ENCODE measurements at regions of chr15 and their contacts with region 1.

Region 1: DNA sequence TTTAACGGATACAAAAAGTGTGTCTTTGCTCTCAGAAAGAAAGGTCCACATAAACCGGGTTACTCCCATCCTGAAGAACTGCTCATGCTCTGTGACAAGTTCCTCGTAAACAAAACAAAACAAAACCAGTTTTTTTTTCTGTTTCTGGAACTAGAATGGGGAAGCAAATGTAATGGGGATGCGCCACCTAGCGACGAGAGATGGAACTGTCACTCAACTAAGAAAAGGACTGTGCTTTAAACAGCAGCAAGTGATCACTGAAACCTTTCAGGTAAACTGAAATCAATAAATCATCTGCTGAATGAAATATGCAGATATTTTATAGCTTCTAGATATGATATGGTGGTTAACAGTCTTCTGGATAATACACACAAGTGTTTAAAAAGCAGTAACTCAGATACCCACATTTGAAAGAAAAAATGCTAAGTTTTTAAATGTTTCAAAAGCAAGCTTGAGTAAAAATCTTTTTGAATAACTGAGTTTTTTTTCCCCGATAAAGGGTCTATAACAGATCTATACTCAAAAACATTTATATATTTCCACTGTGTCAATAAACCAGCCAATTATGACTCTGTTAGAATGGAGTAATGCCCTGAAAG is 10.9 kb downstream of the TM2D3 start:
- DNase-seq: peak; percentile 54 to 75 (median 58)
- ATAC-seq: peak; percentile 81
- H3K4me3 ChIP-seq: no peak overlapping the region
- H3K27ac ChIP-seq: no peak overlapping the region
- H3K4me1 ChIP-seq: no peaks in the 10 kb centered on the region; a peak in 1 of 5 replicates
- H3K27me3 ChIP-seq: no peaks in the 10 kb centered on the region
- CTCF ChIP-seq: peak; percentile 70 to 91 (median 84)
- EP300 ChIP-seq: no peak
- POLR2A ChIP-seq: no peak
- RAD21 ChIP-seq: peak; percentile 82 to 83

Region 2: GRCh38 chr15:101014921-101015841 is 626.1 kb before region 1 on chr15:
- CTCF ChIA-PET with region 1: no interaction called
- POLR2A ChIA-PET with region 1: no interaction called
- in situ Hi-C with region 1: no loop called
- intact Hi-C with region 1: loop called (anchors 2 kb)
- DNase-seq: peak; percentile 80 to 82 (median 82)
- ATAC-seq: peak; percentile 89
- H3K4me3 ChIP-seq: no peak overlapping the region
- H3K27ac ChIP-seq: no peak overlapping the region
- H3K4me1 ChIP-seq: peaks cover 0 to 11% of the 10 kb centered on the region in 2 experiments; a peak in 3 of 5 replicates
- H3K27me3 ChIP-seq: peaks cover 8 to 30% of the 10 kb centered on the region in 2 experiments; a peak in 4 of 5 replicates
- CTCF ChIP-seq: peak; percentile 87 to 93 (median 92)
- EP300 ChIP-seq: no peak
- POLR2A ChIP-seq: no peak
- RAD21 ChIP-seq: peak; percentile 89 to 94

Region 3: DNA sequence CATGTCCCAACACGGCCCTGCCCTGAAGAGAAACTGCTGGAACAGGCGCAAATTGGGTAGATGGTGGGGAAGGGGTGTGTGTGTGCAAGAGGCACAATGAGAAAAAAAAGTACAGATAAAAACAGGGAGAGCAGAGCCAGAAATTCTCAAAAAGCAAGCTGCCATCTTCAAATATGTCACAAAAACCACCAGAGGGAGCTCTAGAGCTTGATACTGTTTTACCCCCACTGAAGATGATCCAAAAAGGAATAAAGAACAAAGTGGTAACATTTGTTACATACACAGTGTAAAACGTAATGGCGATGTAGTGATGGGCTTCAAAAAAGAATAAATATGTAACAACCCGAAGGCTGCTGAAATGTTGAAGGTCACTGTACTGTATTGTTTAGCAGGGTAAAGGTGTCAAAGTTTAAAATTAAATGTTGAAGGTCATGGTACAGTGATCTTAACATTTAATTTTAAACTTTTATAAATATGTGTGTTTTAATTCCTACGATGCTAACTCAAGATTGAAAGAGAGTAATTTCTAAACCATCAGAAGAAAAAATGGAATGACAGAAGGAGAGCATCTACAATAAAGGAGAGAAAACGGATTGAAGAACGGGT is 352.3 kb before region 1 on chr15:
- CTCF ChIA-PET with region 1: interaction called, 16 read pairs
- POLR2A ChIA-PET with region 1: interaction called, 3 read pairs
- in situ Hi-C with region 1: no loop called
- intact Hi-C with region 1: no loop called
- DNase-seq: peak in 3 of 4 experiments; percentile 35 to 70 (median 67)
- ATAC-seq: peak; percentile 72
- H3K4me3 ChIP-seq: no peak overlapping the region
- H3K27ac ChIP-seq: no peak overlapping the region
- H3K4me1 ChIP-seq: peaks cover 0 to 7% of the 10 kb centered on the region in 2 experiments; a peak in 1 of 5 replicates
- H3K27me3 ChIP-seq: no peaks in the 10 kb centered on the region
- CTCF ChIP-seq: peak; percentile 51 to 74 (median 72); a peak in 5 of 6 replicates
- EP300 ChIP-seq: no peak
- POLR2A ChIP-seq: no peak
- RAD21 ChIP-seq: peak; percentile 53 to 57

Region 4: DNA sequence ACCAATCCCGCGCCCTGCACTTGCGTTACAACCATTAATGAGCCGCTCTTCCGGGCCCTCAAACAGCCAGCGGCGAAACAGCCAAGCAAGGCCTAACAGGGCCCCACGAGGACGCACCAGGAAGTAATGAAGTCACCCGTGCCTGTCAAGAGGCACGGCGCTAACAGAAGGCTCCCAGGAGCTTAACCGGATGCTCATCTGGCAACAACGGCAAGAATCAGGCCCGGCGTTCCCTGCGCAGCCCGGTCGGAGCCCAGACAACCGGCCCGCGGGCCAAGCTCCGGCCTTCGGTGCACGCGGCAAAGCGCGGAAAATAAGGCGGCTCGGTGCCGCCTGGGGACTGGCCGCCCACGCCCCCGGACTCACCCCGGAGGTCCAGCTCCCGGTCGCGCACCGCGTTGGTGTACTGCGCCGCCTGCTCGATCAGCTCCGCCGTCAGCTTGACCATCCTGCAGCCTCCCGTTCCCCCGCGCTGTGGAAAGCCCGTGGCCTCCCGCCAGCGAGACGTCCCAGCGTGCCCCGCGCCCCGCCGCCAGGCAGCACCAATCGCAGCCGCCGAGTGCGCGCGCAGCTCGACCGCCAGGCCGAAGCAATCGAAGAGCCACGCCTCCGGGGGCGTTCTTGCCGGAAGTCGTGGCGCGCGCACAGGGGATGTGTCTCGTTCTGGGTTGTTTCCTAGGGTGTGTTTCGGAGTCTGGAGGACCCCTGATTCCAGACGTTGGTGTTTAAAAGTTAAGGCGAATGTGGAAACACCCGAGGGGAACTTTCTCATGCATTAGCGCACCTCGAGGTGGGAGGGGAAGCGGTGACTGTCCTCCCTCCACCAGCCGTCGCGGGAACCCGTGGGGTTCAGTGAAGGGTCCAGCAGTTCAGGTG is 346.3 kb before region 1 on chr15 and contains the start of gene SNRPA1:
- CTCF ChIA-PET with region 1: interaction called, 17 read pairs
- POLR2A ChIA-PET with region 1: interaction called, 3 read pairs
- in situ Hi-C with region 1: no loop called
- intact Hi-C with region 1: loop called (anchors 1 kb)
- DNase-seq: peak; percentile 94 to 97 (median 96)
- ATAC-seq: peak; percentile 91
- H3K4me3 ChIP-seq: peak within 1 kb of the TSS; percentile 96
- H3K27ac ChIP-seq: peak within 1 kb of the TSS; percentile 92
- H3K4me1 ChIP-seq: peaks cover 7 to 9% of the 10 kb centered on the region in 2 experiments; a peak in 2 of 5 replicates
- H3K27me3 ChIP-seq: no peaks in the 10 kb centered on the region
- CTCF ChIP-seq: no peak
- EP300 ChIP-seq: peak; percentile 41; the same call in 1 of the 2 replicates
- POLR2A ChIP-seq: peak; percentile 89
- RAD21 ChIP-seq: no peak
- polyA plus RNA-seq, gene SNRPA1: 212 to 214 TPM

Region 5: DNA sequence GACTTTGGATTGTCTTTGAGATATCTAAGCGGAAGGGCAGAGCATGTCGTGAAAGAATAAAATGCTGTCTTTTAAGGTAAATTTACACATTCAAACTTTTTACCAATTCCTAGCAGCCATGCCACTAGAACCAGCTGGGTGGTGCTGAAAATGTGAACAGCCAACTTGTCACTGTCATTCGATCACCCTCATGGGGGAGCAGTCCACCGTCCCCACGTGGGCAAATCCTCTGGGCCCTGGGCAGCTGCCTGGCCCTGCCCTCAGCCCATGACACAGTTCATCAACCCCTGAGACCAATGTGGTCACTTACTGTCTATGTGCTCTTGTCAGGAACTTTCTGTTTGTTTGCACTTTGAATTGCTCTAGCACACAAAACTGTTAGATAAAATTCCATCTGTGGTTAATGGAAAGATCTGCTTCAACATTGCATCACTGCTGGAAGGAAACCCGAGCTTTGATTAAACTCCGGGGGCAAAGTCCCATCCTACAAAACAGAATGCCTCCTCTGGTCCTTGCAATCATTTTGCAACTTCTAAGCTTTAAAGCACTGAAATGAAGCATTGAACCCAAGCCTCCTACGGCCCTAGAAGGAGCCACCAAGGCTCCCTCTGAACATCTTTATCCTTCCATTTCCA is 201.9 kb before region 1 on chr15:
- CTCF ChIA-PET with region 1: no interaction called
- POLR2A ChIA-PET with region 1: interaction called, 3 read pairs
- in situ Hi-C with region 1: no loop called
- intact Hi-C with region 1: loop called (anchors 10 kb)
- DNase-seq: no peak
- ATAC-seq: no peak
- H3K4me3 ChIP-seq: no peak overlapping the region
- H3K27ac ChIP-seq: no peak overlapping the region
- H3K4me1 ChIP-seq: peaks cover 0 to 3% of the 10 kb centered on the region in 2 experiments; a peak in 2 of 5 replicates
- H3K27me3 ChIP-seq: peaks cover 0 to 4% of the 10 kb centered on the region in 2 experiments; a peak in 2 of 5 replicates
- CTCF ChIP-seq: no peak
- EP300 ChIP-seq: no peak
- POLR2A ChIP-seq: no peak
- RAD21 ChIP-seq: no peak

Region 6: DNA sequence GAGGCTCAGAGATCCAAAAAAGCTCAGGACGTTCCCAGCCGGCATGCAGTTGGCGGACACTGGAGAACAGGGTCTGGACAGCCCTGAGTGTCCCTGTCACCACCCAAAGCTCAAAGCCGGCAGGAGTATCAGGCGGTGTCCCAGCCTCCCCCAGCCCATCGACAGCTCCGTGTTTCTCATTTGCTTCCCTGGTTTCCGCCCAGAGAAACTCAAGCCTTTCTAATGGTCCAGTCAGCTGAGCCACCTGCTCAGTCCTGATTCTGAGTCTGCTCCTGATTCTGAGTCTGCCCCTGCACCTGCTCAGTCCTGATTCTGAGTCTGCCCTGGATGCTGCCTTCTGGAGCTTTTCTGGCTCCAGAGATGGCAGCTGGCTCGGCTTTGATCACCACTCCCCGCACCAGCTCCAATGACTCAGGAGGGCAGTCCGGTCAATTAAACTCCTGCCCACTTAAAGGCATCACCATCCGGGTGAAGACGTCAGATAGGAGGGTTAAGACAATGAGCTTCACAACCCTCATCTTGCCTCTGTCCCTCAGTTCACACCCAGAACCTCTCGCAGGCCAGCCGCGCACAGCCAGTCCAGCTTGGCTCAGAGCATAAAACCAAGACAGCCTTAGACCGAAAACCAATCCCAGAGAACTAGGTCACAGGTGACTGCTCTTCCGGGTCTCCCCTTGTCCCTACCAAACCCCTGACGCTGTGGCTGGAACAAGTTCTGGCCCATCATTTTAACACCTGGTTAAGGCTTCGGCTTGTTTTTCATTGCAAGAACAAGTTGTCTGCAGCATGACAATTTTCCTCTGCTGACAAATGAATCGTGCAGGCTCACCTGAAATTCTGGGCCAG is 158.5 kb before region 1 on chr15:
- CTCF ChIA-PET with region 1: no interaction called
- POLR2A ChIA-PET with region 1: no interaction called
- in situ Hi-C with region 1: no loop called
- intact Hi-C with region 1: no loop called
- DNase-seq: no peak
- ATAC-seq: no peak
- H3K4me3 ChIP-seq: no peak overlapping the region
- H3K27ac ChIP-seq: no peak overlapping the region
- H3K4me1 ChIP-seq: peaks cover 8 to 30% of the 10 kb centered on the region in 2 experiments; a peak in 4 of 5 replicates
- H3K27me3 ChIP-seq: peaks cover 0 to 23% of the 10 kb centered on the region in 2 experiments; a peak in 1 of 5 replicates
- CTCF ChIP-seq: no peak
- EP300 ChIP-seq: no peak
- POLR2A ChIP-seq: no peak
- RAD21 ChIP-seq: no peak

Region 7: GRCh38 chr15:101540480-101541239 is 100.6 kb before region 1 on chr15:
- CTCF ChIA-PET with region 1: interaction called, 4 read pairs
- POLR2A ChIA-PET with region 1: no interaction called
- in situ Hi-C with region 1: no loop called
- intact Hi-C with region 1: loop called (anchors 2 kb)
- DNase-seq: peak in 1 of 4 experiments; percentile 21
- ATAC-seq: peak; percentile 73
- H3K4me3 ChIP-seq: no peak overlapping the region
- H3K27ac ChIP-seq: no peak overlapping the region
- H3K4me1 ChIP-seq: no peaks in the 10 kb centered on the region; a peak in 1 of 5 replicates
- H3K27me3 ChIP-seq: peaks cover 46 to 62% of the 10 kb centered on the region in 2 experiments
- CTCF ChIP-seq: peak; percentile 34 to 39 (median 37); a peak in 3 of 6 replicates
- EP300 ChIP-seq: no peak
- POLR2A ChIP-seq: no peak
- RAD21 ChIP-seq: peak in 1 of 2 experiments; percentile 44; a peak in 2 of 4 replicates

Region 8: GRCh38 chr15:101694261-101694660 is 53.0 kb after region 1 on chr15:
- CTCF ChIA-PET with region 1: no interaction called
- POLR2A ChIA-PET with region 1: no interaction called
- in situ Hi-C with region 1: no loop called
- intact Hi-C with region 1: no loop called
- DNase-seq: peak in 2 of 4 experiments; percentile 24
- ATAC-seq: peak; percentile 83
- H3K4me3 ChIP-seq: no peak overlapping the region
- H3K27ac ChIP-seq: no peak overlapping the region
- H3K4me1 ChIP-seq: peaks cover 0 to 5% of the 10 kb centered on the region in 2 experiments; a peak in 1 of 5 replicates
- H3K27me3 ChIP-seq: no peaks in the 10 kb centered on the region
- CTCF ChIP-seq: peak; percentile 25 to 39 (median 28); a peak in 1 of 6 replicates
- EP300 ChIP-seq: no peak
- POLR2A ChIP-seq: no peak
- RAD21 ChIP-seq: peak in 1 of 2 experiments; percentile 24; a peak in 2 of 4 replicates